ENCODE measurements at regions of chr2 and their contacts with region 1.

Region 1: GRCh38 chr2:69306822-69307578 is 80.0 kb downstream of the GFPT1 start:
- DNase-seq: peak; percentile 88 to 91
- ATAC-seq: peak; percentile 87 to 95 (median 91)
- H3K4me3 ChIP-seq: peak overlapping the region; percentile 67
- H3K27ac ChIP-seq: peak overlapping the region; percentile 61
- H3K4me1 ChIP-seq: peaks cover 20% of the 10 kb centered on the region
- H3K27me3 ChIP-seq: peaks cover 0 to 37% (median 4%) of the 10 kb centered on the region in 3 donors
- CTCF ChIP-seq: peak; percentile 79

Region 2: DNA sequence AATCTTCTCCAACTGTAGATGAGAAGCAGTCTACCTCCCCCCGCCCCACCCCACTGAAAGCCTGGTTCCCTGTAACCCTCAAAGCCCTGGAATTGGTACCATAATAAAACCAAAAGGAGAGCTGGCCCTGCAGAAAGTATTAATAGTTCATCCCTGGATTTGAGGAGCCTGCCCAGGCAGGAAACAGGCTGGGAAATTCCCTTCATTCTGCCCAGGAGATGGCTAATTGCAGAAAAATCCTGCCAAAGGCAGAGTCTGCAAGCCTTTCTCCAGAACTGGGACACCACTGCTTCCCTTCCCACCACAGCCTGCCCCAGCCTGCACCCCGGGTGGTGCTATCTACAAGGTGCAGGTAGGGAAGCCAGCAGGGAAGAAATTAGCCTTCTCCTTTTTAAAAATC is 370.6 kb before region 1 on chr2:
- intact Hi-C with region 1: loop called (anchors 5 to 10 kb)
- DNase-seq: no peak
- ATAC-seq: no peak
- H3K4me3 ChIP-seq: no peak overlapping the region
- H3K27ac ChIP-seq: no peak overlapping the region
- H3K4me1 ChIP-seq: no peaks in the 10 kb centered on the region
- H3K27me3 ChIP-seq: no peaks in the 10 kb centered on the region
- CTCF ChIP-seq: no peak

Region 3: GRCh38 chr2:68943581-68944568 is 363.1 kb before region 1 on chr2:
- intact Hi-C with region 1: loop called (anchors 5 to 10 kb)
- DNase-seq: peak; percentile 19 to 54
- ATAC-seq: peak; percentile 28 to 77 (median 64)
- H3K4me3 ChIP-seq: no peak overlapping the region
- H3K27ac ChIP-seq: no peak overlapping the region
- H3K4me1 ChIP-seq: no peaks in the 10 kb centered on the region
- H3K27me3 ChIP-seq: no peaks in the 10 kb centered on the region
- CTCF ChIP-seq: peak; percentile 65

Region 4: DNA sequence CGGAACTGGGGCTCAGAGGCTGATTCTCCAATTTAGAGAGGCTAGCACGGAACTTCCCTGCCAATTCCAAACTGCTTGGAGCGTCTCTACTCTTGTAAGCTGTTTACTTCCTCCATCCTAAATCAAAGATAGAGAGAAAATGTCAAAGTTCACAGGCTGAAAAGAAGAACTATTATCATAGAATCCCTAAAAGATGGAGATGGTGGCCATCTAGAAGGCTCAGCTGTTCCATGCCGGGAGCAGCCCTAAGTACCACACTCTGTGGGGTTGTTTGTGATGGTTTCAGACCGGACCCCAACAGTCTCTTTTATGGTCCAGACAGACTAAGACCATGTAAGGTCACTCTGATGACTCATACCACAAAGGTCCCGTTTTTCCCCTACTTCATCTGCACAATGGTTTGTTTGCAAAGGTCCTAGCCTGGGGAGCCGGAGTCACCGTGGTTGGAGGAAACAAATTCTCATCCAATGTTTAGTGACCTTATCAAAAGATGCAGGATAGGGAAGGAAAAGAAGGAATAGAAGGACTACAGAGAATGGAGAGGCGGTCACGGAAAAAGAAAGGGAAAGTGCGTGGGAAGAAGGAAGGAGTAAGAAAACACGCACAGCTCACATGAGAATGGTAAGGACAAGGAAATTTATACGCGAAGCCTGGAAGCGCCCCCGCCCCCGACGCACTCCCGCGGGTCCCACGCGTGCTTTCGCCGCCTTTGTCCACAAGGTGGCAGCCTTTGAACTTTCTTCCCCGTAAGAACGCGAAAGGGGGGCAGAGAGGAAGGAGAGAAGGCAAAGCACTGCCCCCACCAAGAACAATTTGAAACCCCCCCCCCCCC is 294.5 kb before region 1 on chr2:
- intact Hi-C with region 1: loop called (anchors 2 to 5 kb)
- DNase-seq: peak; percentile 70 to 81
- ATAC-seq: peak; percentile 64 to 84 (median 76)
- H3K4me3 ChIP-seq: peak overlapping the region; percentile 77
- H3K27ac ChIP-seq: no peak overlapping the region
- H3K4me1 ChIP-seq: peaks cover 6% of the 10 kb centered on the region
- H3K27me3 ChIP-seq: peaks cover 0 to 24% (median 1%) of the 10 kb centered on the region in 3 donors
- CTCF ChIP-seq: peak; percentile 66

Region 5: GRCh38 chr2:69026026-69026425 is 281.0 kb before region 1 on chr2:
- intact Hi-C with region 1: loop called in 1 of 2 experiments (anchors 1 kb)
- DNase-seq: no peak
- ATAC-seq: peak; percentile 64 to 92 (median 76)
- H3K4me3 ChIP-seq: no peak overlapping the region
- H3K27ac ChIP-seq: no peak overlapping the region
- H3K4me1 ChIP-seq: no peaks in the 10 kb centered on the region
- H3K27me3 ChIP-seq: peaks cover 0 to 7% (median 0%) of the 10 kb centered on the region in 3 donors
- CTCF ChIP-seq: peak; percentile 67

Region 6: GRCh38 chr2:70014959-70015358 is 708.0 kb after region 1 on chr2:
- intact Hi-C with region 1: no loop called
- DNase-seq: no peak
- ATAC-seq: no peak
- H3K4me3 ChIP-seq: no peak overlapping the region
- H3K27ac ChIP-seq: no peak overlapping the region
- H3K4me1 ChIP-seq: no peaks in the 10 kb centered on the region
- H3K27me3 ChIP-seq: no peaks in the 10 kb centered on the region
- CTCF ChIP-seq: no peak